HAP-1 (cell line): ENCODE measurements at regions of chr5 and their contacts with region 1.

Region 1: DNA sequence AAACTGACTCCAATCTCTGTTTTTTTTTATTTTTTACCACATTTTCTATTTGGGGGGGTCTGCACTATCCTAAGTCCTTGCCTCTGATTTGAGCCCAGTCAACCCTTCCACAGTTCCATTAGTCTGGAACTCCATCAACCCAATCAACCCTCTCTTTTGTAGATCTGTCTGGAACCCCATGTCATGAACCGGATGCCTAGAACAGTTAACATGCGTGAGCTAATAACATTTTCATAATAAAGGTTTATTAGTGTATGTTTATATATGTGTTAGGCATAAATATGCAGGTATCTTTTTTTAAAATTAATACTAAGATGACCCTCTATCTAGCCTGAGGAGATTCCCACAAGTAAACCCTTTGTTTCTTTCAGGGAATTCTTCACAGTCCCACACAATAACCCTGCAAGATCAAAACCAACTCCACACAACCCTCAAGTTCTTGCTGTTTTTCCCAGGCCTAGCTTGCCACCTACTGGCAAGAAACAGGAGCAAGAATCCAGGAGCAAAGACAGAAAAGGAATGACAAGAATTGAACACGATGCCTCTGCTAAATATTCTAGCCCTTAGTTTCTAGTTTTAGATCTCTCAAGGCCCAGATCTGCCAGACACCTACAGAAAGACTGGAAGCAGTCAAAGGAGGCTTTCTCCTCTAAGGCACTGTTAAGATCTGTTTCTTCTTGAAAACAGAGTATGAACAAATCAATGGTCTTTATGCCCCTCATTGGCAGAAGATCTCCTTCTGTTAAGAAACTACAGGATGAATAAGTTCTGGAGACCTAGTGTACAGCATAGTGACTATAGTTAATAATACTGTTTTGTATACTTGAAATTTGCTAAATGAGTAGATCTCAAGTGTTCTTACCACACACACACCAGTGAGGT is 100.4 kb downstream of the TRIM36 start:
- DNase-seq: peak; percentile 57 to 59
- H3K4me3 ChIP-seq: no peak overlapping the region
- H3K4me1 ChIP-seq: peaks cover 5% of the 10 kb centered on the region
- H3K27me3 ChIP-seq: peaks cover 6% of the 10 kb centered on the region; the same call in 1 of the 2 replicates

Region 2: DNA sequence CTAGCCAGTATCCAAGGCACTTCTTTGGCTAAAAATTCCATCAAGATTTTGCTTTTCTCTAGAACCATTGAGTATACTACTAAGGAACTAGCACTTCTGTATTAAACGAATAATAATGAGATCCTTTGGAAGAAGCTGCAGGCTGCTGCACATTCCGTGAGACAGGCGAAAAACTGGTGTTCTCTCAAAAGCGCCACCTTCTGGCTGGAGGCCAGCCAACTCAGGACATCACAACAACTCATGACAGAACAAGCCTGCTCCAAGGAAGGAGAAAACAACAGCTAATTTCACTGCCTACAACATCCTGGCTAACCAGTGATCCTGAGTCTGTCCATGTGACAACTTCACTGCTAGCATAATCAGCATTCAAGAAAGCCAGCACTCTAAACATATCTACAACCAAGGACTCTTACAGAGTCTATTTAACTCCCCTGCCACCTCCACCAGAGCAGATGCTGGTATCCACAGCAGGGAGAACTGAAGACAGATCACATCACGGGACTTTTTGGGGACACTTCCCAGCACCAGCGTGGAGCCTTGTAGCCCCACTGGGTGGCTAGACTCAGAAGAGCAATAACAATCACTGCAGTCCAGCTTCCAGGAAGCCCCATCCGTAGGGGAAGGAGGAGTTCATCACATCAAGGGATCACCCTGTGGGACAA is 1405.3 kb before region 1 on chr5:
- in situ Hi-C with region 1: loop called (anchors 25 kb)
- DNase-seq: peak; percentile 27 to 72
- H3K4me3 ChIP-seq: no peak overlapping the region
- H3K4me1 ChIP-seq: no peaks in the 10 kb centered on the region
- H3K27me3 ChIP-seq: 0 out of 2 replicates have a peak, but pooled peaks cover 5% of the 10 kb centered on the region

Region 3: DNA sequence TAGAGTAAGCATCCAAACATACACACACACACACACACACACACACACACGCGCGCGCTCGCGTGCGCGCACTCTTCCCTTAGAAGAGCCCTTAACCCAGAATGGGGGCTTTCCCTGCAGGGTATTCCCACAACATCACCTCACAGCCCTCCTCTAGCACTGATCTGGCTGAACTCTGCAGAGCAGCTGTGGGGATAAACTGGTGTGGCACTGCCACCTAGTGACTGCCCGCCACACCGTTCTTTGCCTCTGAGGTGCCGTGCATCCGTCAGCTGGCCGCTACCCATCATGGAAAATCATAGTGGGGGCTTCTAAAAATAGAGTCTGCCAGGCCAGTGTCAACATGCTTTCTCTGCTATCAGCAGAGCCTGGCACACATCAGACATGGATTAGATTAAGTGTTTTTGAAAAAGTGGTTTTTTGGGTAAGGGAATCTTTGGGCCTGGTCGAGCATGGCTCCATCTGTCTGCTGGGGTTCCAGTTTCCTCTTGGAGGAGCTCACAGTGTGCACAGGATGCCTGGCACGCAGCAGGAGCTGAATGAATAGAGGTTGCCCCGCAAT is 619.4 kb before region 1 on chr5:
- in situ Hi-C with region 1: no loop called
- DNase-seq: peak; percentile 42 to 68
- H3K4me3 ChIP-seq: no peak overlapping the region
- H3K4me1 ChIP-seq: no peaks in the 10 kb centered on the region
- H3K27me3 ChIP-seq: peaks cover 7% of the 10 kb centered on the region; the same call in 1 of the 2 replicates

Region 4: DNA sequence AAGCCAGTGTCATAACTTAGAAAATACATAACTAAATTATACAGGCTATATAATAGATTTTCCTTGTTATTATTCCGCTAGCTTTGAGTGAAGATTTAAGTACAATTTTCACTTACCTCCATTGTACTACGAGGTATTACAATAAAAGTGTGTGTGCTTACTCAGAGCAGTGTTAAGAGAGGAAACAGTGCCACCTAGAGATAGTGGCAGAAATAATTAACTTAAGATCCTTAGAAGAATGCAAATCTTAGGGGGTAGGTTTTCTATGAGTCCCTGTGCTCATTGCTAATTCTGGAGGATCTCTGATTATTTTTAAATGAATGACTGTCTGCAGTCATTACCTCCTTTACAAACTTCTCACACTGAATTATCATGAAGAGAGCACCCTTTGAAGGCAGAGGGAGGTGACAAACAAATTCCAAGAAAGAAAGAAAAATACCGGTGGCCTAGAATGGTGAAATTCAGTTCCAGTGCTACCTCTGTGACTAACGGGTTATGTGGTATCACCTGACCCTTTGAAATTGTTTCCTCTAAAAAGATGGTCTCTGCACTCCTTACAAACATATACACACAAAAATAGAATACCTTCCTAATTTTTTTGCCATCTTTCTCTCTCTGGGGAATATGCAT is 279.4 kb before region 1 on chr5:
- in situ Hi-C with region 1: no loop called
- DNase-seq: peak in 1 of 2 experiments; percentile 30
- H3K4me3 ChIP-seq: no peak overlapping the region
- H3K4me1 ChIP-seq: no peaks in the 10 kb centered on the region
- H3K27me3 ChIP-seq: no peaks in the 10 kb centered on the region

Region 5: GRCh38 chr5:114803353-114803752 is 266.0 kb before region 1 on chr5:
- in situ Hi-C with region 1: no loop called
- DNase-seq: no peak
- H3K4me3 ChIP-seq: no peak overlapping the region
- H3K4me1 ChIP-seq: no peaks in the 10 kb centered on the region
- H3K27me3 ChIP-seq: 0 out of 2 replicates have a peak, but pooled peaks cover 2% of the 10 kb centered on the region

Region 6: DNA sequence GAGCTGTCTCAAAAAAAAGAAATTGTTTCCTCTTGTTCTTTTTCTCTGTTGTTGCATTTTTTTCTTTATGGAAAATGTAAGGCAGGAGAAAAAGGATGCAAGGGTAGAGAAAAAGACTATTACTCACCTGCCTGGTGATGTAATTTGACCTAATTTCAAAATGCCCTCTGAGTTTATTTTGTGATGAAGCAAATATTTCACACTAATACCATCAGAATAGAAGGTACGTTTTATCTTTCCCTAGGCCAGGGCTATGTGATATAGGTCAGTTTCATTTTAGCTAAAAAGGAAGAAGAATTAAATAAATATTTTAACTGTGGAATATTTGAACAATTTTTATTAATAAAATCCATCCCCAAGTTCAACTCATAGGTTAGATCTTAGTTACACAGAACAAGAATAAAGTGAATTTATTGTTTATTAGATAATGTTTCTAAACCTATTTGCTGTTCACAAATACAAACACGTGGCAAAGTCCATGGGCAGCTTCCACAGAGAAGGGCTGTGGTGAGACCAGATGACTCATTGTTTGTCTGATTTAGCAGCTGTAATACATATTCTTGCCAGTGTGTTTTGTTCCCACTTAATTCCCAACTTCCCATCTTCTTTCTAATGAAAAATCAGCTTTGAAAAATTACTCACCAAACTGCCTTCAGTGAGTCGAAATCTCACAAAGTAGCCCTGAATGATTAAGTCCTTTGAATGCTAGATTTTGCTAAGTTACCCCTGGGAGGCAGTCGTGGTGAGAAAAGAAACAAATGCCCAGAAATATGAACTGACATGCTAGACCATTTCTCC is 279.9 kb after region 1 on chr5:
- in situ Hi-C with region 1: no loop called
- DNase-seq: no peak
- H3K4me3 ChIP-seq: no peak overlapping the region
- H3K4me1 ChIP-seq: peaks cover 11% of the 10 kb centered on the region
- H3K27me3 ChIP-seq: no peaks in the 10 kb centered on the region